RWPE1 (cell line): ENCODE measurements at regions of chr7 and their contacts with region 1.

Region 1: GRCh38 chr7:100632951-100633717 is 8.2 kb downstream of the TFR2 start:
- DNase-seq: peak; percentile 41
- H3K27ac ChIP-seq: peak overlapping the region; percentile 50
- CTCF ChIP-seq: peak; percentile 81

Region 2: GRCh38 chr7:100613412-100614175 is 19.5 kb before region 1 on chr7:
- CTCF ChIA-PET with region 1: interaction called, 14 read pairs
- POLR2A ChIA-PET with region 1: interaction called, 3 read pairs
- DNase-seq: no peak
- H3K27ac ChIP-seq: peak overlapping the region; percentile 91
- CTCF ChIP-seq: no peak; the same call in 1 of the 2 replicates

Region 3: DNA sequence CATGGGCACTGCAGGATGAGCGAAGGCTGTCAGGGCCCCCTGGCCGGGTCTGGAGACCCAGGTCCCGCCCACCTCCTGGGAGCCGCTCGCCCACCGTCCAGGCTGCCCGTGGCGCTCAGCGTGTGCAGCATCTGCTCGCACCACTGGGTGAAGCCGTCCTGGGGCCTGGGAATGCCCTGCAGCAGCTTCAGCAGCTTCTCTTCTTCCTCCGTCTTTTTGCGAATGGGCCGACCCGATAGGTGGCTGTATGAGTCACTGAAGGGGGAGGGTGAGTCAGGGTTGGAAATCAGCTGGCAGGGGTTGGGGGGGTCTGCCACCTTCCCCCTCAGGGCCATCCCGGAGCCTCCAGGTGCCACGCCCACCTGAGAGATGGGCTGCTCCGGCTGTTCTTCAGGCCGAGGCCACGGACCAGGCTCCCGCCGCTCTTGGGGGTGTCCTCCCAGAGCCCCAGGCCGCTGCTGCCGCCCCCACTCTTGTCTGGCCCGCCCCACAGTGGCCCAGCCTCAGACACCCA is 49.2 kb after region 1 on chr7:
- CTCF ChIA-PET with region 1: interaction called, 10 read pairs
- POLR2A ChIA-PET with region 1: no interaction called
- DNase-seq: no peak
- H3K27ac ChIP-seq: peak overlapping the region; percentile 92
- CTCF ChIP-seq: no peak

Region 4: GRCh38 chr7:101625031-101625791 is 992.1 kb after region 1 on chr7:
- CTCF ChIA-PET with region 1: no interaction called
- POLR2A ChIA-PET with region 1: no interaction called
- DNase-seq: no peak
- H3K27ac ChIP-seq: peak overlapping the region; percentile 9; the same call in 1 of the 2 replicates
- CTCF ChIP-seq: no peak